ENCODE measurements at regions of chr15 and their contacts with region 1.

Region 1: DNA sequence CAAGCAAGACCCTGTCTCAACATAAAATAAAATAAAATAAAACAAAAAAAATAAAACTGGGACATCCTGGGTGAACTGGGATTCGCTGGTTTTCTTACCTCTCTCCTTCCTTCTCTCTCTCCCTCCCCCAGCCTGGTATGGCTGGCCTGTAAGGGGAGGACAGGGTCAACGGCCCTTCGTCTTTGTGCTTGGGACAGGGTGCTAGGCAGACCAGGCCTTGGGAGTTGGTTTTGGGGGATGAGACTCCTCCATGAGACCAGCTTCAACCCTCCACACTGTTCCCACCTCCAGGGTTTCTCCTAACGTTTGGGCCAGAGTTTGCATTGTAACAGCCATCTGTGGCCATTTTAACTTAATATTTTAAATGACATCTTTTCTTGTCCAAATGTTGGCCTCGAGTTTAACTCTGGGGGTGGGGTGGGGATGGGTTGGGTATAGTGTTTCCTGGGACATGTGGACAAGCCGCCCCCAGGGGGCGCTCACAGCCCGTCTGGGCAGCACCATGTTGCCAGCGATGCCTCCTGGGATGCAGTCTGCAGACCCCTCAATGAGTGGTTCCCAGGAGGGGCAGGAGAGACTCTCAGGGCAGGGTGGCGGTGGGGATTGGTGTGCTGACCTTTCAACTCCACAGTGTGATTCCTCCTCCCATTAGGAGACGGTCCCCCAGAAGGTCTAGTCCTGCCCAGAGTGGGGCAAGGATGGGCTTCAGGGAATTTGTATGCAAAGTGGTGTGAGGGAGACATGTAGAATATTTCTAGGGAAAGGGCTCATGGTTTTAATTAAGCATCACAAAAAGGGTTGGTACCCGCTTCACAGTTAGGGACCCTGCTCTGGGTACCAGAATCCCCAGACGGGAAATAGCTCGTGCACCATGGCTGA is 37.7 kb upstream of the LCTL start:
- DNase-seq: peak; percentile 53 to 82
- ATAC-seq: peak; percentile 71 to 90 (median 75)
- H3K4me3 ChIP-seq: no peak overlapping the region
- H3K4me3 Mint-ChIP-seq: no peak overlapping the region
- H3K27ac ChIP-seq: no peak overlapping the region
- H3K27ac Mint-ChIP-seq: no peak overlapping the region
- H3K4me1 ChIP-seq: no peaks in the 10 kb centered on the region
- H3K4me1 Mint-ChIP-seq: no peaks in the 10 kb centered on the region
- H3K27me3 ChIP-seq: no peaks in the 10 kb centered on the region
- H3K27me3 Mint-ChIP-seq: no peaks in the 10 kb centered on the region
- CTCF ChIP-seq: peak; percentile 70

Region 2: DNA sequence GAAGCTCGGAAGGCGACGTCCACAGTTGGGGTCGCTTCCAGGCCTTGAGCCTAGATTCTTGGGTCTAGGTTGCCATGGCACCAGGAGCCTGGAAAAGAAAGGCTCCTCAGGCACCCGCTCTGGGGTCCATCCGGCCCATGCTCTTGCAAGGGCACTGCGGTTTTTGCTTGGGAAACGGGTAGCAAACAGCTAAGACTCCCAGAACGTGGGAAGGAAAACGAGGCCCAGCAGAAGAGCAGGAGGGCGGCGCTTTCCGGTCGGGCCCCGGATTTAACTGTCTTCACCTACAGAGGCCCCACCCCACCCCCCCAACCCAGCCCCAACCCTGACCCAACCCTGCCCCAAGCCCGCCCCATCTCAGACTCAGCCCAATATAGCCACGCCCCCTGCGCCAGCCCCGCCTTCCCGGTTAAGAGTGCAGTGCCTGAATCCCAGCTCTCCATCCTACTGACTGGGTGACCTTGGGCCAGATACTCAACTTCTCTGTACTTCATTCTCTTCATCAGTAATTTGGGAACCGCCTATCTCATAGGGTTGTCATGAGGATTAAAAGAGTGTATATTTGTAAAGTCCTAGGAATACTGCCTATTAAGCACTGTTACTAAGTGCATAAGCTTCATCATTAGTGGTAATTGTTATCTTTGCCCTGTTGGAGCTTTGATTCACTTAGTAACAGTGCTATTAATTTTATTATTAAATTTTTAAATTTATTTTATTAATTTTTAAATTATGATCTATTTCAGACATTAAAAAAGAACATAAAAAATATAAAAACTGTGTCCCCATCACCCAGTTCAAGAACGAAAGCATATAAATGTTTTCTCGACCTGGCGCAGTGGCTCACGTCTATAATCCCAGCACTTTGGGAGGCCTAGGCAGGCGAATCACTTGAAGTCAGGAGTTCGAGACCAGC is 70.1 kb after region 1 on chr15:
- intact Hi-C with region 1: no loop called
- DNase-seq: peak in 1 of 2 donors; percentile 44
- ATAC-seq: peak in 2 of 3 donors; percentile 49 to 70
- H3K4me3 ChIP-seq: no peak overlapping the region
- H3K4me3 Mint-ChIP-seq: no peak overlapping the region
- H3K27ac ChIP-seq: no peak overlapping the region
- H3K27ac Mint-ChIP-seq: no peak overlapping the region
- H3K4me1 ChIP-seq: peaks cover 12% of the 10 kb centered on the region
- H3K4me1 Mint-ChIP-seq: peaks cover 6 to 29% of the 10 kb centered on the region in 2 donors
- H3K27me3 ChIP-seq: no peaks in the 10 kb centered on the region
- H3K27me3 Mint-ChIP-seq: no peaks in the 10 kb centered on the region
- CTCF ChIP-seq: no peak

Region 3: GRCh38 chr15:66774001-66774814 is 170.7 kb after region 1 on chr15:
- intact Hi-C with region 1: loop called (anchors 1 kb)
- DNase-seq: peak in 1 of 2 donors; percentile 70
- ATAC-seq: peak in 2 of 3 donors; percentile 55 to 63
- H3K4me3 ChIP-seq: no peak overlapping the region
- H3K4me3 Mint-ChIP-seq: no peak overlapping the region
- H3K27ac ChIP-seq: no peak overlapping the region
- H3K27ac Mint-ChIP-seq: no peak overlapping the region
- H3K4me1 ChIP-seq: no peaks in the 10 kb centered on the region
- H3K4me1 Mint-ChIP-seq: no peaks in the 10 kb centered on the region
- H3K27me3 ChIP-seq: no peaks in the 10 kb centered on the region
- H3K27me3 Mint-ChIP-seq: no peaks in the 10 kb centered on the region
- CTCF ChIP-seq: peak; percentile 23

Region 4: DNA sequence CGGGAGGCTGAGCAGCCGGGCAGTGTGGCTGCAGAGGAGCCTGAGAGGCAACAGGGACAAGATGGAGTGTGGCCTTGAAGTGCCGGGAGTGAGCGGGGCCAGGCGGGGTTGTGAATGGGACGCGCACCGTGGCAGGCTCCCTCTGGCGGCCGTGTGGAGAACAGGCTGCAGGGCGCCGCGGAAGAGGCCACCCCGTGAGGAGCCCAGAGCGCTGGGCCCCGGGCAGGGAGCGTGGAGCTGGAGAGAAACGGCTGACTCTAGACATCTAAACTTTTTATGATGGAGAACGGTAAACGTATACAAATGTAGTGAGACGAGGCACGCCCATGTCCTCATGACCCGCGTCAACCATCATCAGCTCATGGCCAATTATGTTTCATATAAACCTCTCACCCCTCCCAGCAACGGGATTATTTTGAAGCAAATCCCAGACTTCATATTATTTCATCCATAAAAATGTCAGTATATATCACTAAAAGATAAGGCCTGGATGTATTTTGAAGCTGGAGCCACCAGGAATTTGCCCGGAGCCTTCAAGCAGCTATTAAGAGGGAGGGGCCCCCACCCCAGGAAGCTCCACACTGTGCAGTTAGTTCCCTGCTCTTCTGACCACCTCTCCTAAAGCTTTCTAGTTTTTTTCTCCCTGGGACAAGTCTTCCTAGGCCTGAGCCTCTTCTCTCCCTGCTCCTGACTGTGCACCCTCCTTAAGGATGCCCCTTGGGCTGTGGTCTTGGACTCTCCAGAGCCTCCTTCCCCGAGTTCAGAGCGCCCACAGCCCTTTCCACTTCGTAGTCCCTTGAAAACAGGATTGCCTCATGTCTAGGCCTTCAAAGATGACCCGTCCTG is 247.9 kb after region 1 on chr15:
- intact Hi-C with region 1: loop called (anchors 1 kb)
- DNase-seq: peak; percentile 65 to 84
- ATAC-seq: peak; percentile 87 to 100 (median 99)
- H3K4me3 ChIP-seq: no peak overlapping the region
- H3K4me3 Mint-ChIP-seq: peak overlapping the region; percentile 17
- H3K27ac ChIP-seq: no peak overlapping the region
- H3K27ac Mint-ChIP-seq: no peak overlapping the region
- H3K4me1 ChIP-seq: peaks cover 6% of the 10 kb centered on the region
- H3K4me1 Mint-ChIP-seq: peaks cover 12 to 14% of the 10 kb centered on the region in 2 donors
- H3K27me3 ChIP-seq: no peaks in the 10 kb centered on the region
- H3K27me3 Mint-ChIP-seq: peaks cover 3 to 6% of the 10 kb centered on the region in 2 donors
- CTCF ChIP-seq: peak; percentile 94